Heart left ventricle (tissue), 16 donors: ENCODE measurements at regions of chr21 and their contacts with region 1.

Region 1: GRCh38 chr21:14737922-14738321 is 191.8 kb upstream of the SAMSN1 start:
- DNase-seq: peak in 2 of 5 donors; percentile 12 to 21
- ATAC-seq: peak in 1 of 4 donors; percentile 54
- H3K4me3 ChIP-seq: no peak overlapping the region
- H3K27ac ChIP-seq: no peak overlapping the region
- H3K4me1 ChIP-seq: peaks cover 0 to 10% (median 0%) of the 10 kb centered on the region in 12 donors
- H3K27me3 ChIP-seq: no peaks in the 10 kb centered on the region
- CTCF ChIP-seq: peak; percentile 24 to 67 (median 56)
- POLR2A ChIP-seq: no peak

Region 2: GRCh38 chr21:14259747-14260146 is 478.2 kb before region 1 on chr21:
- intact Hi-C with region 1: loop called in 2 of 10 experiments (anchors 10 kb)
- DNase-seq: no peak
- ATAC-seq: peak in 3 of 4 donors; percentile 53 to 70 (median 62)
- H3K4me3 ChIP-seq: no peak overlapping the region
- H3K27ac ChIP-seq: no peak overlapping the region
- H3K4me1 ChIP-seq: no peaks in the 10 kb centered on the region
- H3K27me3 ChIP-seq: peaks cover 0 to 6% (median 0%) of the 10 kb centered on the region in 9 donors
- CTCF ChIP-seq: peak; percentile 37 to 73 (median 53)
- POLR2A ChIP-seq: no peak

Region 3: GRCh38 chr21:14438211-14438610 is 299.7 kb before region 1 on chr21:
- intact Hi-C with region 1: loop called in 2 of 10 experiments (anchors 10 kb)
- DNase-seq: no peak
- ATAC-seq: no peak
- H3K4me3 ChIP-seq: no peak overlapping the region
- H3K27ac ChIP-seq: no peak overlapping the region
- H3K4me1 ChIP-seq: no peaks in the 10 kb centered on the region
- H3K27me3 ChIP-seq: no peaks in the 10 kb centered on the region
- CTCF ChIP-seq: no peak
- POLR2A ChIP-seq: no peak

Region 4: GRCh38 chr21:14448784-14449183 is 289.1 kb before region 1 on chr21:
- intact Hi-C with region 1: loop called in 1 of 10 experiments (anchors 10 kb)
- DNase-seq: no peak
- ATAC-seq: no peak
- H3K4me3 ChIP-seq: no peak overlapping the region
- H3K27ac ChIP-seq: no peak overlapping the region
- H3K4me1 ChIP-seq: no peaks in the 10 kb centered on the region
- H3K27me3 ChIP-seq: no peaks in the 10 kb centered on the region
- CTCF ChIP-seq: no peak
- POLR2A ChIP-seq: no peak